Psoas muscle (tissue), 8 donors: ENCODE measurements at regions of chr11 and their contacts with region 1.

Region 1: DNA sequence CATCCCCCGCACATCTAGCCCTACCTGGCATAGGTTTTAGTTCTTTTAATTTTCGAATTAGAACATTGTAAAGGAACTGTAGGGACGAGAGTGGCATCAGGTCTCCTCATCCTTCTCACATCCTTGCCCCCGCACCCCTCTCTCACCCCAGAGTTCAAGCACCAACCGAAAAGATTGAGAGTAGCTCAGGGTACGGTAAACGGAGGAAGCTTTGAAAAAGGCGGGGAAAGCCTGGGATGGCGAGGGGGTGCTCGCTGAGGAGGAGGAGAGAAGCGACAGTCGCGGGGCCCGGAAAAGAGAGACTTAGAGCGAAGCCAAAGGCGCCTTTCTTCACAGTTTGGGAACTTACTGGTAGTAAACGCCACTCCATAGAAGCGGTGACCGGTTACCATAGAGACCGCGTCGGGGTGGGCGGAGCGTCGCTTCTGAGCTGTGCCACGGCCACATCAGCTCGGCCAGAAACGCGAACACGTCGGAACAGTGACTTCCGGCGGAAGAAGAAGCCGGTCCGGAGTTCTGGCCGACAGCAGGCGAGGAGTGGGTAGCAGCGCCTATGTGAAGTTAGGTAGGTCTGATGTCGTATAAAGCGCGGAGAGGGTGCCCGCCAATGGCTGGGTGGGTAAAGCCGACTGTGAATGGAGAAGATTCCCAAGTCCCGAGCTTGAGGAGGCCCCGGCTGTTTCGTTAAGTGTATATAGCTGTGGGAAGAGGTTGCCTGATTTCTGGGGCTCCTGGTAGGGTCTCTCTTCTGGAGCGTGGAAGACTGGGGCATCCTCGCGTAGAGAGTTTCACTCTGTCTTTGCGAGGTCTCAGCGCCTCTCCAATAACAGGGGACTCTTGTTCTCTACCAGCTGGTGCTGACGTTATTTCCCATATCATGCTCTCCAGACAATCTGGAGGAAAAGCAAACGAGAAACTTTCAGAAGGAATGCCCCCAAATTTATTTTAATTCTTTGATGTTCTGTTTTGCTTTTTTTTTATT is at the starts of genes DCDC1 and DNAJC24:
- DNase-seq: peak; percentile 89 to 95
- ATAC-seq: peak; percentile 100
- H3K4me3 ChIP-seq: peak within 1 kb of the TSS; percentile 83
- H3K27ac ChIP-seq: peak within 1 kb of the TSS; percentile 78
- H3K4me1 ChIP-seq: no peaks in the 10 kb centered on the region
- H3K27me3 ChIP-seq: no peaks in the 10 kb centered on the region
- CTCF ChIP-seq: no peak
- total RNA-seq, gene DCDC1: not detected
- total RNA-seq, gene DNAJC24: 12.4 to 22.0 (median 15.8) TPM

Region 2: DNA sequence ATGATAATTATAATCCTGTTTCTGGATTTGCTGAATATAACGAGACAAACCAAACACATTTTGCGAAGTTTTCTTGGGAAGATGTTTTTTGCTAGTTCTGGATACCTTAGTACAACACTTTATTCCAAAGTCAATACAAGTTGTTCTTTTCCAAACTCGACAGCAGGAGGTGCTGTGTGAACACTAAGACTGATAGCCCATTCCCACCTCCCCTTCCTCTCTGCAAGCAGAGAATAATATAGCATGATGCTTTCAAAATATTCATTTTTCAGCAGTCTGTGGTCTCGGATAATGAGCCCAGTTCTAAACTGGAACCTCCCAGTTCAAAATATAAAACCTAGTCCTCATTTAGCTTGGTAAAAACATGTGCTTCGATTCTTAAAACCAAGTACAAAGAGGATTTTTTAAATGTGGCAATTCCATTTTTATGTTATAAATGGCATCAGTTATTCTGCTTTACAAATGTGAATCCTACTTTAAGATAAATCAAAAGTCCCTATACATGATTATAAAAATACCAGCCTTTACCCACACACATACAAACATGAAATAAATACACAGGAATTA is 129.2 kb before region 1 on chr11:
- intact Hi-C with region 1: loop called in 1 of 2 experiments (anchors 10 kb)
- DNase-seq: no peak
- ATAC-seq: peak in 1 of 4 donors; percentile 75
- H3K4me3 ChIP-seq: no peak overlapping the region
- H3K27ac ChIP-seq: no peak overlapping the region
- H3K4me1 ChIP-seq: no peaks in the 10 kb centered on the region
- H3K27me3 ChIP-seq: no peaks in the 10 kb centered on the region
- CTCF ChIP-seq: peak; percentile 52

Region 3: DNA sequence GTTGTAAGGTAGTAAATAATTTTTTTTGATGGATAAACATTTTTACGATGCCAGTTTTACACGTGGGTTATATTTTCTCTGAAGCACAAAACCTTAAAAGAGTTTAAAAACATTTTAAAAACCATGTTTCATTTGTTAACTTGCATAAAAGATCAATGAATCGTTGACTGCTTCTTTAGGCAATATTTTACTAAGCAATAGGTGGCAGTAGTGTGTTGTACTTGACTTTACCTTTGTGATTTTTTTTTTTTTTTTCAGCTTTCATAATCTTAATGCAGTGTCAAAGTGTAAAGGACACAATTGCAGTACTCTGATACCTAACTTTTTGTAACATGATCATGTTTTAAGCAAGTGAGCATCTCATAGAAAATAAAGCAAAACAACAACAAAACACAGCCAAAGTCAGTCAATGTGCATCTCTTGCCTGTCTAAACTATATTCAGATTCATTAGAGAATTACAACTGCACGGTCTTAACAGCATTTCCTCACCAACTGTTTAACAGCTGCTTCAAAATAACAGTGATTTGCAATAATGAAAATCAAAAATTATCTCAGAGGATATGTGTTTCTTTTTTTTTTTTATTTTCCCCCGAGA is 27.7 kb after region 1 on chr11:
- intact Hi-C with region 1: no loop called
- DNase-seq: no peak
- ATAC-seq: no peak
- H3K4me3 ChIP-seq: no peak overlapping the region
- H3K27ac ChIP-seq: no peak overlapping the region
- H3K4me1 ChIP-seq: no peaks in the 10 kb centered on the region
- H3K27me3 ChIP-seq: no peaks in the 10 kb centered on the region
- CTCF ChIP-seq: peak; percentile 53

Region 4: GRCh38 chr11:31433851-31434250 is 64.2 kb after region 1 on chr11:
- intact Hi-C with region 1: no loop called
- DNase-seq: no peak
- ATAC-seq: no peak
- H3K4me3 ChIP-seq: no peak overlapping the region
- H3K27ac ChIP-seq: no peak overlapping the region
- H3K4me1 ChIP-seq: no peaks in the 10 kb centered on the region
- H3K27me3 ChIP-seq: no peaks in the 10 kb centered on the region
- CTCF ChIP-seq: no peak